ENCODE measurements at regions of chr5 and their contacts with region 1.

Region 1: GRCh38 chr5:142605611-142606010 is 80.3 kb downstream of the FGF1 start:
- DNase-seq: no peak
- ATAC-seq: no peak
- H3K4me3 ChIP-seq: no peak overlapping the region
- H3K27ac ChIP-seq: no peak overlapping the region
- H3K4me1 ChIP-seq: peaks cover 28% of the 10 kb centered on the region
- CTCF ChIP-seq: no peak
- EP300 ChIP-seq: no peak
- POLR2A ChIP-seq: no peak
- RAD21 ChIP-seq: no peak

Region 2: DNA sequence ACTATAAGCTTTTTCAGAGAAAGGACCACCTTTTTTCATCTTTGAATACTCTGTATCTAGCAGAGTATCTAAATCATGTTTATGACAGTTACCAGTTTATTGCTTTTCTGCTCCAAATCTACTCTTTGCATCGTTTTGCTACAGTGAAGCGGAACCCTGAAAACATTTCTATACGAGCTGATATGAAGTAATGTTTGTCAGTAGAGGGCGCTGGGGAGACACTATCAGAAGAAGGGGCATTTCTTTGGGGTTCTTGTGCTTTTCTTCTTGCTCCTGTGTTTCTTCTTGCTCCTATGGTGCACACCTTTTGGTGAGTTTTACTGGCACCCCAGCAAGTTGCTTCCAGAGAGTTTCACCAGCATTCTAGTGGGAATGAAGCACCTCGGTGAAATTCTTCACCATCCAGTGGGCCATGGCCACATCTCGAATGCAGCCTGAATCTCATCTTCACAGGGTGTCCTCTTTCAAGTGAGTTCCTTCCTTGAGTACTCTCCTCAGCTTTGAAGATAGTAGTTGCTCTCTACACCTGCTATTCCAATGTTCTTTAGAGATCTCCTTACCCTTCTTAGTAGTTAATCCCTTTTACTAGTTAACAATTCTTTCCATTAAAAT is 18.2 kb before region 1 on chr5:
- CTCF ChIA-PET with region 1: interaction called, 11 read pairs
- POLR2A ChIA-PET with region 1: no interaction called
- DNase-seq: peak; percentile 22 to 52
- ATAC-seq: peak; percentile 64 to 78; a peak in 5 of 6 replicates
- H3K4me3 ChIP-seq: no peak overlapping the region
- H3K27ac ChIP-seq: no peak overlapping the region
- H3K4me1 ChIP-seq: no peaks in the 10 kb centered on the region
- CTCF ChIP-seq: peak; percentile 77
- EP300 ChIP-seq: no peak
- POLR2A ChIP-seq: no peak
- RAD21 ChIP-seq: peak; percentile 59 to 70

Region 3: DNA sequence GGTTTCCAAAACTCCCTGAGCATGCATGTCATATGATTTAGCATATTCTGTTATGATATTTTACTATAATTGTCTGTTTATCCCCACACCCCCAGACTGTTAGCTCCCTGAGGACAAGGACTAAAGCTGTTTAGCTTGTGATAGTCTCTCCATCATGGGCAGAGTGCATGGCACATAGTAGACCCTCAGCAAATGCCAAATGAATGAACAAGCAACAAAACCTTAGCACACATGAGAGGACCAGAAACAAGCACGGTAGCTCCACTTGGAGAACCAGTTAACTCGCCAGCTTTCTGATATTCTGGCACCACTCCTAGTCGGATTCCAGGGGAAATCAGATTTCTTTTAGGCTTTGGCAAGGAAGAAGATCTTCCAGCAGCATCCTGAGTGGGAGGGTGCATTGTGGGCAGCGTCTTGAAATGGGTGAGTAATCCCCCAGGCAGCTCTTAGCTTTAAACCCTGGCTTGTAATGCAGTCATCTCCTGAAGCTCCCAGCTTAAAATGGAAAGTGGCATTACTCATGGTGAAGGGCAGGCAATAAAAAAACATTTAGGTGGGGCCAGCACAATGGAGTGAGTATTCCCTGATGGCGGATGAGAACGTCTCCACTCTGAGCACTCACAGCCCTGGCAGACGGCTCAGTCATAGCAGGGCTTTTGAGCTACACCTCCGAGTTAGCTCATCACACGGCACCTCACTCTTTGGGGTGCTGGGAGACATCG is 39.2 kb after region 1 on chr5:
- CTCF ChIA-PET with region 1: interaction called, 54 read pairs
- POLR2A ChIA-PET with region 1: no interaction called
- DNase-seq: peak; percentile 83 to 85
- ATAC-seq: peak; percentile 94 to 97
- H3K4me3 ChIP-seq: no peak overlapping the region
- H3K27ac ChIP-seq: peak overlapping the region; percentile 3 to 77; a peak in 4 of 6 replicates
- H3K4me1 ChIP-seq: peaks cover 18% of the 10 kb centered on the region
- CTCF ChIP-seq: no peak
- EP300 ChIP-seq: no peak
- POLR2A ChIP-seq: no peak
- RAD21 ChIP-seq: no peak

Region 4: GRCh38 chr5:142800776-142801494 is 195.3 kb after region 1 on chr5:
- CTCF ChIA-PET with region 1: no interaction called
- POLR2A ChIA-PET with region 1: no interaction called
- DNase-seq: no peak
- ATAC-seq: no peak
- H3K4me3 ChIP-seq: no peak overlapping the region
- H3K27ac ChIP-seq: peak overlapping the region in 1 of 2 experiments; percentile 16; a peak in 2 of 6 replicates
- H3K4me1 ChIP-seq: peaks cover 57% of the 10 kb centered on the region
- CTCF ChIP-seq: no peak
- EP300 ChIP-seq: no peak
- POLR2A ChIP-seq: no peak
- RAD21 ChIP-seq: no peak